Heart right ventricle (tissue), 16 donors: ENCODE measurements at regions of chrX and their contacts with region 1.

Region 1: GRCh38 chrX:136147315-136147901 is at the start of gene FHL1:
- DNase-seq: peak; percentile 67 to 76
- ATAC-seq: peak; percentile 79 to 96 (median 90)
- H3K4me3 ChIP-seq: peak within 1 kb of the TSS; percentile 44 to 84 (median 67)
- H3K27ac ChIP-seq: peak within 1 kb of the TSS; percentile 84 to 96 (median 91)
- H3K4me1 ChIP-seq: peaks cover 0 to 9% (median 0%) of the 10 kb centered on the region in 9 donors
- H3K27me3 ChIP-seq: peaks cover 0 to 36% (median 0%) of the 10 kb centered on the region in 7 donors
- CTCF ChIP-seq: no peak
- total RNA-seq, gene FHL1: 367 to 3,919 (median 2,586) TPM

Region 2: DNA sequence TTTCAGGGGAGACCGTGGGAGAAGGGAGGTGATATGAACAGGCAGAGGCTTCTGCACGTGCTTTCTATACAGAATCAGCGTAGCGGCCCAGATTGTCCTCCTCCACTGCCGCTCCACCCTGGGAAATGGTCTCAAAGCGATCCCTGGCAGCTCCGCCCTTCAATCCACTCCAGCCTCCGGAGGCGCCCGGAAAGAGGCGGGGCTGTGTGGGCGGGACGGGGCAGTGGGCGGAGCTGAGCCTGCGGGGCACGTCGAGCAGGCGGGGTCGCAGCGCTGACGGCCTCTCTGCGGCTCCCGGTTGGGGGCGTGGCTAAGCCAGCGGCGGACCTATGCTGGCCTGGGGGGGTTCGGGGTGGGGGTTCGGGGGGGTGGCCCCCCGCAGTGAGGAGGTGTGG is 725.9 kb before region 1 on chrX:
- intact Hi-C with region 1: no loop called
- DNase-seq: peak; percentile 89
- ATAC-seq: peak; percentile 94 to 98 (median 98)
- H3K4me3 ChIP-seq: peak overlapping the region in 9 of 10 donors; percentile 46 to 59 (median 53)
- H3K27ac ChIP-seq: peak overlapping the region in 5 of 10 donors; percentile 23 to 35 (median 28)
- H3K4me1 ChIP-seq: peaks cover 0 to 5% (median 0%) of the 10 kb centered on the region in 9 donors
- H3K27me3 ChIP-seq: peaks cover 0 to 16% (median 0%) of the 10 kb centered on the region in 7 donors
- CTCF ChIP-seq: no peak

Region 3: DNA sequence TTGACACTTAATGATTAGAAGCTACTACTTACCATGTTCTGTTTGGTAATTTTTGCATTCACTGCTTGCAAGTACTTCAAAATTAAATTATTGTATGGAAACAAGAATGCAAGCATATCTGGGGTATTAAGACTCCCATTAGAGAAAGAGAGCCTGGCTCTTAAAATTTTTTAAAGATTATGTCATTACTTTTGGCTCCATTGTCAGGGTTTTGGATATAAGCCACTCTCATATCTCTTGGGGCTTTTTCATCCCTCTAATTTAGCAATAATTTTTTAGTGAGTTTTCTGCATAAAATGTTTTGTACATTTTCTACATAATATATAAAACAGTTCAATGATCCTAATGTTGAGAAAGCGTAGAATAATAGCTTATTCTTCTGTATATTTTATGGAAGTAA is 112.7 kb before region 1 on chrX:
- intact Hi-C with region 1: loop called in 3 of 10 experiments (anchors 5 kb)
- DNase-seq: no peak
- ATAC-seq: no peak
- H3K4me3 ChIP-seq: no peak overlapping the region
- H3K27ac ChIP-seq: peak overlapping the region in 5 of 10 donors; percentile 26 to 56 (median 44)
- H3K4me1 ChIP-seq: peaks cover 0 to 46% (median 9%) of the 10 kb centered on the region in 9 donors
- H3K27me3 ChIP-seq: peaks cover 0 to 17% (median 0%) of the 10 kb centered on the region in 7 donors
- CTCF ChIP-seq: no peak

Region 4: DNA sequence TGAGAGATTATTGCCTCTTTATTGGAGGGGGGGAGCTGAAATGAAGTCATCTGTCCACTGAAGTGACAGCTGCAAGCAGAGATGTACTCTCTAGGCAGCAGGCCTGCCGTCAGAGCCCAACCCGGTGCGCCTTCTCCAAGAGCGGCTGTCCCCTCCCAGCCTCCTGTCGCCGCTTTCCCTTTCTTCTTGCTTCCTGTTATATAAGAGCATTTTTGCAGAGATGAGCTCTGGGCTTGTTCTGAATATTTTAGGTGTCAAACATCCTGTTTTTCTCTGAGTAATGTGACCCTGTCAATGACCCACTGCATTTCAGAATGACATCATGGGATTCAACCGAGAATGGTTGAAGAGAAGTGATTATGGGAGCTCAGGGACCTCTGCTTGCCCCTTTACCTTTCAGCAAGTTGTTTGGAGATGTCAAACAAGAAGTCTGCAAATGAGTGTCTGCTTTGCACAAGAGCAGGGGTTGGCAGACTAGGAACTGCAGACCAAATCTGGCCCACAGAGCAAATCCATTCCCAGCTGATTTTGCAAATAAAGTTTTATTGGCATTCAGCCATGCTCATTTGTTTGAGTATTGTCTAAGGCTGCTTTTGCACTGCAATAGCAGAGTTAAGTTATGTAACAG is 82.2 kb before region 1 on chrX:
- intact Hi-C with region 1: no loop called
- DNase-seq: peak; percentile 40 to 65
- ATAC-seq: peak in 7 of 8 donors; percentile 75 to 87 (median 85)
- H3K4me3 ChIP-seq: no peak overlapping the region
- H3K27ac ChIP-seq: peak overlapping the region in 8 of 10 donors; percentile 7 to 72 (median 58)
- H3K4me1 ChIP-seq: peaks cover 0 to 24% (median 9%) of the 10 kb centered on the region in 9 donors
- H3K27me3 ChIP-seq: peaks cover 0 to 5% (median 0%) of the 10 kb centered on the region in 7 donors
- CTCF ChIP-seq: no peak